ENCODE measurements at regions of chr2 and their contacts with region 1.

Region 1: GRCh38 chr2:172102391-172103278 is at the start of gene DLX2:
- DNase-seq: peak; percentile 81
- H3K4me3 Mint-ChIP-seq: peak within 1 kb of the TSS; percentile 71
- H3K27ac Mint-ChIP-seq: no peak within 1 kb of the TSS
- H3K4me1 Mint-ChIP-seq: peaks cover 50% of the 10 kb centered on the region
- H3K27me3 Mint-ChIP-seq: peaks cover 70% of the 10 kb centered on the region
- total RNA-seq, gene DLX2: not detected

Region 2: GRCh38 chr2:171574149-171574795 is 528.4 kb before region 1 on chr2:
- CTCF ChIA-PET with region 1: interaction called, 6 read pairs
- POLR2A ChIA-PET with region 1: no interaction called
- intact Hi-C with region 1: loop called (anchors 1 kb)
- DNase-seq: peak; percentile 90
- H3K4me3 Mint-ChIP-seq: no peak overlapping the region
- H3K27ac Mint-ChIP-seq: no peak overlapping the region
- H3K4me1 Mint-ChIP-seq: peaks cover 7% of the 10 kb centered on the region
- H3K27me3 Mint-ChIP-seq: peaks cover 2% of the 10 kb centered on the region

Region 3: GRCh38 chr2:171687287-171688128 is 415.1 kb before region 1 on chr2 and contains the start of gene DYNC1I2:
- CTCF ChIA-PET with region 1: no interaction called
- POLR2A ChIA-PET with region 1: no interaction called
- intact Hi-C with region 1: loop called (anchors 5 kb)
- DNase-seq: peak; percentile 88
- H3K4me3 Mint-ChIP-seq: peak within 1 kb of the TSS; percentile 89
- H3K27ac Mint-ChIP-seq: peak within 1 kb of the TSS; percentile 85
- H3K4me1 Mint-ChIP-seq: peaks cover 20% of the 10 kb centered on the region
- H3K27me3 Mint-ChIP-seq: no peaks in the 10 kb centered on the region
- total RNA-seq, gene DYNC1I2: 54.2 to 55.8 TPM

Region 4: DNA sequence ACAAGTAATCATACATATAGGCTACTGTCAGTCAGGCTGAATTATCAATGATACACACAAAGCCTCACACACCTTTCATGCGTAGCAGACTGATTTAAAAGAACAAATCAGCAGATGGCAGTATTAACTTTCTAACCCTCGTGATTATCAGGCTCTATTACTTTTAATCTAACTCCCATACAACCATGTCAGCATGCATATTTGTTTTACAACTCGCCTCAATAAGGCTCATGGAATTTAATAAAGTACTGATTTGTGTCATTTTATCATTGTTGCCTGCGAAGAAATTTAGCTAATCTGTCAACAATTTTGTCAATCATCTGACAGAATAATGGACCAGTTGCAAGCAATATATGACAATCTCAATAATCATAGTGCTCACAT is 291.4 kb before region 1 on chr2:
- CTCF ChIA-PET with region 1: interaction called, 7 read pairs
- POLR2A ChIA-PET with region 1: no interaction called
- intact Hi-C with region 1: loop called (anchors 1 kb)
- DNase-seq: no peak
- H3K4me3 Mint-ChIP-seq: no peak overlapping the region
- H3K27ac Mint-ChIP-seq: no peak overlapping the region
- H3K4me1 Mint-ChIP-seq: no peaks in the 10 kb centered on the region
- H3K27me3 Mint-ChIP-seq: no peaks in the 10 kb centered on the region

Region 5: GRCh38 chr2:171824086-171824485 is 278.5 kb before region 1 on chr2:
- CTCF ChIA-PET with region 1: no interaction called
- POLR2A ChIA-PET with region 1: no interaction called
- intact Hi-C with region 1: no loop called
- DNase-seq: no peak
- H3K4me3 Mint-ChIP-seq: no peak overlapping the region
- H3K27ac Mint-ChIP-seq: no peak overlapping the region
- H3K4me1 Mint-ChIP-seq: no peaks in the 10 kb centered on the region
- H3K27me3 Mint-ChIP-seq: no peaks in the 10 kb centered on the region

Region 6: GRCh38 chr2:171999604-172000469 is 102.8 kb before region 1 on chr2 and contains the start of gene METAP1D:
- CTCF ChIA-PET with region 1: no interaction called
- POLR2A ChIA-PET with region 1: no interaction called
- intact Hi-C with region 1: loop called (anchors 5 kb)
- DNase-seq: peak; percentile 91
- H3K4me3 Mint-ChIP-seq: peak within 1 kb of the TSS; percentile 93
- H3K27ac Mint-ChIP-seq: peak within 1 kb of the TSS; percentile 81
- H3K4me1 Mint-ChIP-seq: peaks cover 20% of the 10 kb centered on the region
- H3K27me3 Mint-ChIP-seq: peaks cover 6% of the 10 kb centered on the region
- total RNA-seq, gene METAP1D: 3.4 to 3.9 TPM

Region 7: DNA sequence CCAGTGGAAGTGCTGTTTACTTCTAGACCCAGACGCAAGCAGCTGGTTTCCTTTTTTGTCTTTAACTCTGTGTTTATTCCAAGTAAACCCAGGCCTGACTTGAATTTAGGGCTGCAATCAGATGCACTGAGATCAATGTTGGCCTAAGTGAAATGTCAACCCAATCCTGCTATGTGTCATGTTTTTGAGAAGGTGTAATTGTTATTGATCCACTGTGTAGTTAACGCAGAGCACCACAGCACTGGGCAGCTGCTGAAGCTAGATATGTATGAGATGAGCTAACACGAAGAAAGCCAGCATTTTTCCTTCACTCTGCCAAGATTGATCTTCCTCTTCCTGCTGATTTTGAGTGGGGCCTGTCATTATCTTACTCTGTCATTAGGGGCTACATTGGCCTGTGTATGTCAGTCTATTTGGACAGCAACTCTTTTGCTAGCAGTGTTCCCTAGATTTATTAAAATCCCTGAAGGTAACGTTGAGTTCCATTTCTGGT is 36.2 kb before region 1 on chr2:
- CTCF ChIA-PET with region 1: no interaction called
- POLR2A ChIA-PET with region 1: no interaction called
- intact Hi-C with region 1: no loop called
- DNase-seq: no peak
- H3K4me3 Mint-ChIP-seq: no peak overlapping the region
- H3K27ac Mint-ChIP-seq: no peak overlapping the region
- H3K4me1 Mint-ChIP-seq: no peaks in the 10 kb centered on the region
- H3K27me3 Mint-ChIP-seq: no peaks in the 10 kb centered on the region

Region 8: GRCh38 chr2:172090044-172090961 is 12.3 kb before region 1 on chr2:
- CTCF ChIA-PET with region 1: interaction called, 88 read pairs
- POLR2A ChIA-PET with region 1: interaction called, 8 read pairs
- intact Hi-C with region 1: loop called (anchors 1 kb)
- DNase-seq: no peak
- H3K4me3 Mint-ChIP-seq: no peak overlapping the region
- H3K27ac Mint-ChIP-seq: peak overlapping the region; percentile 3
- H3K4me1 Mint-ChIP-seq: peaks cover 46% of the 10 kb centered on the region
- H3K27me3 Mint-ChIP-seq: peaks cover 85% of the 10 kb centered on the region

Measured in activated CD4-positive, alpha-beta memory T cell treated with anti-CD3 and anti-CD28 coated beads for 36 hours (primary cell).